ENCODE measurements at regions of chr13 and their contacts with region 1.

Region 1: DNA sequence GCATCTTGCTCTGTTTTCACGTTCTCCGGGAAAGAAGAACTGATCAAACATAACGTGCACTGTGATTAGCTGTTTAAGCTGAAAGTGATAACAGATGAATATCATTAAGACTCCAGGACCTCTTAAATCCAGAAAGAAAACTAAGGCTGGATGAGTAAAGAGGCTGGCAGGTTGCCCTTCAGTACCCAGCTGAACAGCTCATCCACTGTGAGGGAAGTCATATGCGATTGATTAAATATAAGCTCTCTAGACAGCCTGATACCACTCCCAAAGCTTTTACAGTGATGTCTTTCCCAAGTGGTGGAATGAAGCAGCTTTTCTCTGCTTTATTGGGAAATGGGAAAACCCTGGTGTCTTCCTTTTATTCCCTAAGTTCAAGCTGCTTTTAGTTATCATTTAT is 116.9 kb downstream of the EFNB2 start:
- DNase-seq: no peak
- ATAC-seq: no peak

Region 2: GRCh38 chr13:106357198-106357597 is 61.4 kb before region 1 on chr13:
- intact Hi-C with region 1: no loop called
- DNase-seq: no peak
- ATAC-seq: no peak

Region 3: GRCh38 chr13:106493533-106494220 is 75.1 kb after region 1 on chr13:
- intact Hi-C with region 1: loop called (anchors 5 kb)
- DNase-seq: no peak
- ATAC-seq: no peak

Region 4: DNA sequence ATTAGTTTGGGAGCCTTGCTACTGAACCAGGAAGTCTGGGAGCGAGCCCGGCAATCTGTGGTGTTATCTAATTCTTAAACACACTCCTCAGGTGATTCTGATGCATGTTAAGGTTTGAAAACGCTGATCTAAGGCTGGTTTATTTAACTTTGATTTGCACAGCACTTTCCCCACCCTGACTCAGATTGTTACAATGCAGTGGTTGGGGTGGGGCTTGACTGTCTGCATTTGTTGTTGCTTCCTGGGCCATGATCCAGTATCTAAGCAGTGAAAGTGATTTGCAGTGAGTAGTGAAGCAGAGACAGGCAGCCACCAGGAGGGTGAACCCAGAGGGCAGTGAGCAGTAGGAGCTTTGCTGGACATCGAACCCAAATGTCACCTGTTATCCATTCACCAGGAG is 230.9 kb after region 1 on chr13:
- intact Hi-C with region 1: no loop called
- DNase-seq: no peak
- ATAC-seq: no peak

Measured in Right ventricle myocardium inferior (tissue), 1 donor.